Endothelial cell of umbilical vein (primary cell): ENCODE measurements at regions of chr4 and their contacts with region 1.

Region 1: DNA sequence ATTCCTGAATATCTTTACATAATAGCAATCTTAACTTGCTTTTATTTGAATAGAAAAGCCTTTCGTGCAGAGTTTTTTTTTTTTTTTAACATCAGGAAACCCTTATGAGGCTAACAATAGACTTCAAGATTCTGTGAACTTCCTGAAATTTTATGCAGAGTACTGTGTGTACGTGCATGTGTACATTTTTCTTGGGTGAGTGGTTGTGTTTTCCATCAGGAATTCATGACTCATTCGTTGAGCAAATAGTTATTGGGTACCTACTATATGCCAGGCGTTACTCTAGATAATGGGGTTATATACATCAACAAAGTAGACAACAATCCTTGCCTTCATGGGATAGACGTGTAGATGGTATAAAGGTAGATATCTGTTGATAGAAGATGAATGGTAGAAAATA is 59.1 kb downstream of the MRPL1 start:
- DNase-seq: peak; percentile 97
- H3K4me3 ChIP-seq: peak overlapping the region in 1 of 3 experiments; percentile 37
- H3K27ac ChIP-seq: peak overlapping the region; percentile 99
- H3K4me1 ChIP-seq: peaks cover 58% of the 10 kb centered on the region
- H3K27me3 ChIP-seq: no peaks in the 10 kb centered on the region
- CTCF ChIP-seq: no peak
- POLR2A ChIP-seq: peak; percentile 62

Region 2: DNA sequence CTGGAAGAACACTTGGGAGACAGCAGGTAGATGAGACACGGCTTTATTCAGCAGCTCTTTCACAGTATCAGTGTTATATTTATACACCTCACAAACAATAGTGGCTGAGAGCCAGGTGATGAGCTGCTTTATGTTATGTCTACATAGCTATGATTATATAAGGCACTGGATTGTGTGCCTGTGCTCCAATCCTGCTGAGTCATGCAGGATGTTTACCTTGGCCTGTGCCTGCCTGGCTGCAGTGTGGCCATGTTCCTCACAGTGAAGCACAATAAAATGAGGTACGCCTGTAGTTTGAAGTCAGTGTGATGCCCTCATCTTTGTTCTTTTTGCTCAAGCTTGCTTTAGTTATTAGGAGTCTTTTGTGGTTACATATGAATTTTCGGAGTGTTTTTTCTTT is 284.8 kb before region 1 on chr4:
- CTCF ChIA-PET with region 1: no interaction called
- POLR2A ChIA-PET with region 1: no interaction called
- dilution Hi-C with region 1: no loop called
- intact Hi-C with region 1: loop called (anchors 5 kb)
- DNase-seq: peak; percentile 97
- H3K4me3 ChIP-seq: no peak overlapping the region
- H3K27ac ChIP-seq: peak overlapping the region; percentile 51
- H3K4me1 ChIP-seq: peaks cover 10% of the 10 kb centered on the region
- H3K27me3 ChIP-seq: peaks cover 0 to 1% of the 10 kb centered on the region in 2 experiments
- CTCF ChIP-seq: no peak
- POLR2A ChIP-seq: no peak

Region 3: GRCh38 chr4:77854431-77855111 is 67.1 kb before region 1 on chr4:
- CTCF ChIA-PET with region 1: no interaction called
- POLR2A ChIA-PET with region 1: no interaction called
- dilution Hi-C with region 1: no loop called
- intact Hi-C with region 1: loop called (anchors 1 kb)
- DNase-seq: peak; percentile 87
- H3K4me3 ChIP-seq: peak overlapping the region in 1 of 3 experiments; percentile 24
- H3K27ac ChIP-seq: peak overlapping the region; percentile 89
- H3K4me1 ChIP-seq: peaks cover 27% of the 10 kb centered on the region
- H3K27me3 ChIP-seq: no peaks in the 10 kb centered on the region
- CTCF ChIP-seq: no peak
- POLR2A ChIP-seq: peak; percentile 62

Region 4: GRCh38 chr4:78551479-78552351 is 630.0 kb after region 1 on chr4 and contains the start of gene ANXA3:
- CTCF ChIA-PET with region 1: no interaction called
- POLR2A ChIA-PET with region 1: no interaction called
- dilution Hi-C with region 1: no loop called
- intact Hi-C with region 1: loop called (anchors 1 kb)
- DNase-seq: peak; percentile 39
- H3K4me3 ChIP-seq: peak within 1 kb of the TSS; percentile 38 to 89 (median 63)
- H3K27ac ChIP-seq: peak within 1 kb of the TSS; percentile 98
- H3K4me1 ChIP-seq: peaks cover 26% of the 10 kb centered on the region
- H3K27me3 ChIP-seq: no peaks in the 10 kb centered on the region
- CTCF ChIP-seq: peak in 1 of 2 donors; percentile 4
- POLR2A ChIP-seq: peak; percentile 63
- total RNA-seq, gene ANXA3: 73.8 and 78.4 TPM in 2 replicates

Region 5: DNA sequence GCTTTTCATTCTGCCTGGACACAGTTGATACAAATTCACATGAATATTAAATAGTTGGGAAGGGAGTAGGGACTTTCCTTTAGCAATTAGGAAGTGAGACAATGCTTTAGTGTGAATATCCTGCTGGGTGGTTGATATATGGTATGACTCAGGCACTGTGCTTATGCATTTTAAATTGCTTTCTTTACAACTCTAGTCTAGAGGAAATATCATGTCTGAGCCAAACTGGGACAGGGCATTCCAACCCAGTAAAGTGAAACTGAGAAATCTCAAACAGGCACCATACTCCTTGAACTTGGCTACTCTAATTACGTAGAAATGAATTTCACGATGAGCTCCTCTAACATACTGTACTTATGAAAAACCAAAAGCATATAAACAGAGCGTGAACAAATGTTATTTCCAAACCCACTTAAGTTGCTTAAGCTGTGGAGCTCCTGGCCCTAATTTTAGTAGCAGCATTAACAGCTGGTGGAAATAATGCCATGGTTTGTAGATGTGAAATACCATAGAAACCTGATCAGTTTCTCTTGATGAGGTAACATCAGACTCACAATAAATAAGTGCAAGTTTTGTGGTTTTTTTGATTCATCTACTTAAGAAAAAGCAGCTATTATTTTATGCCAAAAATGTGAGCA is 1729.2 kb after region 1 on chr4:
- CTCF ChIA-PET with region 1: no interaction called
- POLR2A ChIA-PET with region 1: no interaction called
- dilution Hi-C with region 1: no loop called
- intact Hi-C with region 1: loop called (anchors 5 kb)
- DNase-seq: peak; percentile 96
- H3K4me3 ChIP-seq: peak overlapping the region in 1 of 3 experiments; percentile 3
- H3K27ac ChIP-seq: peak overlapping the region; percentile 87
- H3K4me1 ChIP-seq: peaks cover 29% of the 10 kb centered on the region
- H3K27me3 ChIP-seq: no peaks in the 10 kb centered on the region
- CTCF ChIP-seq: no peak
- POLR2A ChIP-seq: no peak